ENCODE measurements at regions of chr19 and their contacts with region 1.

Region 1: DNA sequence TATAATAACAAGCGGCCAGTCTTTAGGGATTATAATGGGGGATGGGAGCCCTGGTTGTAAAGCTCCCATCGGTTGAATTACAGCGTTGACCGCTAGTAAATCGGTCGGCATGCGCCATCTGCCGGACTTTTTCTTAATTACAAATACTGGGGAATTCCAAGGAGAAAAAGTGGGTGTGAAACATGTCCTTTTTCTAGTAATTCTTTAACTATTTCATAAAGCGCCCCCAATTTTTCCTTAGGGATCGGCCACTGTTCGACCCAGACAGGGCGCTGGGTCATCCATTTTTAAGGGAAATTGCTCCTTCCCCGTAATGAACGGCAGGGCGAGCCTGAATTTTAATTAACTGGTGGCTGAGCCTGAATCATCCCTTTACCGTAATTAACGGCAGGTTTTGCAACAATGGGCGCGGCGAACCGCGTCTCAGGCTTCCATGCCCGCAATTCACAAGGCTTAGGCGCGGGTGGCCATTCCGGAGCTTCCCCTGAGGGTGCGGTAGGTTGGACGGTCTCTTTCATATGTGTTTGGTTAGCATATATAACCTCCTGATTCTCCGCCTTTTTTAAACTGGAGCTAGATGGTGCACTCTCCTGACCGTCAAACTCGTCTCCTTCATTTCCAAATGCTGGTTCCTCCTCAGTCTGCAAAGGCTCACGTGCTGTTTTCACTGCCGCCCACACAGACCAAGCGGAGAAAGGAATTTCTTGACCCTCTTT is 30.2 kb upstream of the EVI5L start:
- DNase-seq: peak; percentile 56
- ATAC-seq: peak; percentile 82

Region 2: GRCh38 chr19:7565332-7565731 is 234.5 kb before region 1 on chr19:
- intact Hi-C with region 1: loop called (anchors 5 kb)
- DNase-seq: no peak
- ATAC-seq: no peak

Region 3: DNA sequence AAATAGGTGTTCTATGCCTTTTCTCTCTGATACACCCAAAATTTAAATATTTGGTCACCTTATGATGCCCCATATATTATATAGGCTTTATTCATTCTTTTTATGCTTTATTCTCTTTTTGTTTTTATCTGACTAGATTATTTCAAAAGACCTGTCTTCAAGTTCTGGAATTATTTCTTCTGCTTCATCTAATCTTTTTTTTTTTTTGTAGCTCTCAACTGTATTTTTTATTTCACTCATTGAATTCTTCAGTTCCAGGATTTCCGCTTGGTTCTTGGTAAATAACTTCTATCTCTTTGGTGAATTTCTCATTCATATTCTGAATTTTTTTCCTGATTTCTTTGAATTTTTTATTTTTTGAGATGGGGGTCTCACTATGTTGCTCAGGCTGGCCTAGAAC is 40.6 kb before region 1 on chr19:
- intact Hi-C with region 1: no loop called
- DNase-seq: no peak
- ATAC-seq: no peak

Measured in left ventricle myocardium superior (tissue), 1 donor.